ENCODE measurements at regions of chr22 and their contacts with region 1.

Region 1: DNA sequence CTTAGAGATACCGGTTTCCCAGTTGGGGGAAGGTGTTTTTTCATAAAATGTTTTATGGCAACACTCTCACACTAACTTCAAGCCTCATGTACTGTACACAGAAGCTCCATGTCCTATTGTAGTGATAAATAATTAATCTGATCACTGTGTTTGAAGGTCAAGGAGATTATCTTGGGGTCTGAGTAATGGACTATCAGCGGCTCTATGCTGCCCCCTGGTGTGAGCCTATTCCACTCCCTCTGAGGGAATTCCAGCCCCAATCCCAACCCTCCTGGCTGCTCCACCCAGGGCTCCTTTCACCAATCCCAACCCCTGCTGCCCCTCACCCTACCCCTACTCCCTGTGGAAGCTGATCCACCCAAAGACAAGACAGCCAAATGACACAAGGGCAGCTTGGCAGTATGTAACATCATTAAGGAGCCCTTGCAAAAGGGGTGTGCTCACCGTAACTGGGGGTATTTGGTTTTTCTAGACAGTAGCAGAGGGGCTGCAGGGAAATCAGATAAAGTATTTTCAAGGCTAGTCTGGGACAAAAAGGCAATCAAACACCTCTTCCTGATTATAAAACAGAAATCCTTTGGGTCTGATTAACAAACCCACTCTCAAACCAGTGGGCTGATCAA is 22.3 kb downstream of the HPS4 start:
- DNase-seq: no peak
- ATAC-seq: peak; percentile 88
- H3K4me3 ChIP-seq: no peak overlapping the region
- H3K27ac ChIP-seq: no peak overlapping the region
- H3K4me1 ChIP-seq: no peaks in the 10 kb centered on the region
- H3K27me3 ChIP-seq: no peaks in the 10 kb centered on the region
- CTCF ChIP-seq: peak; percentile 81

Region 2: DNA sequence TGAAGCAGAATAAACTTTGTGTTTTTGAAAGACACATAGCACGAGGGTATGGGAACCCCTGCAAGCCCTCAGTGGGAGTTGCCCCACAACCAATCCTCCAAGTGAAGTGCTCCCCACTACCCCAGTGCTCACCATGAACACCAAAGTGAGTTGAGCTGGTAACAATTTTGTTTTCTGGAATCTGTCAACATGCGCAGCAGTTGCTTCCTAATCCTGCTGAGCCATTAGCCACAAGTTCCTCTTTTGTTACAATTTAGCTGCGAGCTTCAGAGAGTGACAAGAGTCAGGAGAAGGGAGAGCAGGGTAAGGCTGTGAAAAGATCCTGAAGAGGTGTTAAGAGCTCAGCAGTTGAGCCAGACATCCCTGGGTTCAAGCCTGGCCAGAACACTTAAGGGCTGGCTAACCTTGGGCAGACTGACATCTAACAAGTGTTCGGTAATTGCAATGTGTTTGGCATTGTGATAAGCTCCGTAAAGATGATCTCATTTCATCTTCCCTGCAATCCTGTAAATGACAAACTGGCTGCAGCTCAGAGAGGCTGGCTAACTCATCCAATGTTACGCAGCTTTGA is 56.4 kb before region 1 on chr22:
- CTCF ChIA-PET with region 1: no interaction called
- POLR2A ChIA-PET with region 1: no interaction called
- in situ Hi-C with region 1: no loop called
- intact Hi-C with region 1: loop called (anchors 5 kb)
- DNase-seq: no peak
- ATAC-seq: no peak
- H3K4me3 ChIP-seq: no peak overlapping the region
- H3K27ac ChIP-seq: no peak overlapping the region
- H3K4me1 ChIP-seq: no peaks in the 10 kb centered on the region
- H3K27me3 ChIP-seq: no peaks in the 10 kb centered on the region
- CTCF ChIP-seq: no peak